Natural killer cell (primary cell): ENCODE measurements at regions of chr6 and their contacts with region 1.

Region 1: DNA sequence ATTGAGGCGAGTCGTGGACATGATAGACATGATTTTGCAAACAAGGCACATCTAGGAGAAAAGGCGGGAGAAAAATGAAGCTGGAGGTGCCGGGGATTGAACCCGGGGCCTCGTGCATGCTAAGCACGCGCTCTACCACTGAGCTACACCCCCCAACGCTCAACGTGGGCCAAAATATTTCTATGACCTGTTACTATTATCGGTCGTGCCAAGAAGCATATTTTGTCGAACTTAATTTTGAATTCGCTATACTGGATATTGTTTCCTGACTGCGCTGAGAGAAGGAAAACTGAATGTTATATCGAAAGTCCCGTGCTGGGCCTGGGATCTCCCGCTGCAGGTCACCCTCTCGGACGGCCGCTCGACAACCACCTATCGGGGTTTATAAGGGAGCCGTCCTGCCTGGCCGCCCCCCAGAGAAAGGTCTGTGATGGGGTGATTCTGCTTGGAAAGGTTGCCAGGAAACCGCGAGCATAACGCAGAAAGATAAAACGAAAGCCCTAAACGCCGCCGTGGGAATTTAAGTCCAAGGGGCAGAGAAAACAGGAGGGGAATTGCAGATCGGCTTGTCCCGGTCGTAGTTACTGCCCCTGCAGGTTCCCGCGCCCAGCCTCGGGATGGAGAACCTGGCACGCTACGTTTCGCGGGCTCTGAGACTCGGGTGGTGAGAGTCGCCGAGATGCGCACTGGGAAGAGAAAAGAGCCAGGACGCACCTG is 60.0 kb downstream of the TRIM27 start:
- DNase-seq: peak; percentile 74 to 93
- ATAC-seq: peak; percentile 41 to 47 (median 45)
- H3K4me3 ChIP-seq: peak overlapping the region; percentile 81
- H3K4me3 Mint-ChIP-seq: peak overlapping the region; percentile 99
- H3K27ac ChIP-seq: peak overlapping the region; percentile 39
- H3K27ac Mint-ChIP-seq: peak overlapping the region; percentile 93 to 99
- H3K4me1 ChIP-seq: peaks cover 32% of the 10 kb centered on the region
- H3K4me1 Mint-ChIP-seq: peaks cover 50 to 55% of the 10 kb centered on the region in 2 donors
- H3K27me3 ChIP-seq: no peaks in the 10 kb centered on the region
- H3K27me3 Mint-ChIP-seq: peaks cover 11 to 19% of the 10 kb centered on the region in 2 donors
- CTCF ChIP-seq: no peak

Region 2: DNA sequence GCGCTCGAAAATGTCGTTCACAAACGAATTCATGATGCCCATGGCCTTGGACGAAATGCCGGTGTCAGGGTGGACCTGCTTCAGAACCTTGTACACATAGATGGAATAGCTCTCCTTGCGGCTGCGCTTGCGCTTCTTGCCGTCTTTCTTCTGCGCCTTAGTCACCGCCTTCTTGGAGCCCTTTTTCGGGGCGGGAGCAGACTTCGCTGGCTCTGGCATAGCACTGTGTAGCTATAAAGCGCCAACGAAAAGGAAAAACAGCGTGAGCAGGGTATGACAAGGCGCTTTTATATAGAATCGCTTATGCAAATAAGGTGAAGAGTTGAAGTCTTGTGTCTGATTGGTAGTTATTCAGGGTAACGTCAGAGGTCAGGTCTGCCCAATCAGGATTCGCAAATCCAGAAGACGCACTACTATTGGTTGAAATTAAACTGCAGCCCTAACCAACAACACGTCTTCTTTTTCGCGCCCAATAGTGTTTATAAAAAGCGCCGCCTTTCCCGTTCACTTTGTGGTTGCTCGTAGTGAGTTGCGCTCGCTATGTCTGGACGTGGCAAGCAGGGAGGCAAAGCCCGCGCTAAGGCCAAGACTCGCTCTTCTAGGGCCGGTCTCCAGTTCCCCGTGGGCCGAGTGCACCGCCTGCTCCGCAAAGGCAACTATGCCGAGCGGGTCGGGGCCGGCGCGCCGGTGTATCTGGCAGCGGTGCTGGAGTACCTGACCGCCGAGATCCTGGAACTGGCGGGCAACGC is 1731.1 kb before region 1 on chr6:
- intact Hi-C with region 1: loop called (anchors 2 kb)
- DNase-seq: peak; percentile 87 to 98
- ATAC-seq: peak; percentile 82 to 95 (median 87)
- H3K4me3 ChIP-seq: peak overlapping the region; percentile 65
- H3K4me3 Mint-ChIP-seq: no peak overlapping the region
- H3K27ac ChIP-seq: peak overlapping the region; percentile 85
- H3K27ac Mint-ChIP-seq: no peak overlapping the region
- H3K4me1 ChIP-seq: peaks cover 29% of the 10 kb centered on the region
- H3K4me1 Mint-ChIP-seq: peaks cover 5 to 6% of the 10 kb centered on the region in 2 donors
- H3K27me3 ChIP-seq: no peaks in the 10 kb centered on the region
- H3K27me3 Mint-ChIP-seq: no peaks in the 10 kb centered on the region
- CTCF ChIP-seq: no peak

Region 3: DNA sequence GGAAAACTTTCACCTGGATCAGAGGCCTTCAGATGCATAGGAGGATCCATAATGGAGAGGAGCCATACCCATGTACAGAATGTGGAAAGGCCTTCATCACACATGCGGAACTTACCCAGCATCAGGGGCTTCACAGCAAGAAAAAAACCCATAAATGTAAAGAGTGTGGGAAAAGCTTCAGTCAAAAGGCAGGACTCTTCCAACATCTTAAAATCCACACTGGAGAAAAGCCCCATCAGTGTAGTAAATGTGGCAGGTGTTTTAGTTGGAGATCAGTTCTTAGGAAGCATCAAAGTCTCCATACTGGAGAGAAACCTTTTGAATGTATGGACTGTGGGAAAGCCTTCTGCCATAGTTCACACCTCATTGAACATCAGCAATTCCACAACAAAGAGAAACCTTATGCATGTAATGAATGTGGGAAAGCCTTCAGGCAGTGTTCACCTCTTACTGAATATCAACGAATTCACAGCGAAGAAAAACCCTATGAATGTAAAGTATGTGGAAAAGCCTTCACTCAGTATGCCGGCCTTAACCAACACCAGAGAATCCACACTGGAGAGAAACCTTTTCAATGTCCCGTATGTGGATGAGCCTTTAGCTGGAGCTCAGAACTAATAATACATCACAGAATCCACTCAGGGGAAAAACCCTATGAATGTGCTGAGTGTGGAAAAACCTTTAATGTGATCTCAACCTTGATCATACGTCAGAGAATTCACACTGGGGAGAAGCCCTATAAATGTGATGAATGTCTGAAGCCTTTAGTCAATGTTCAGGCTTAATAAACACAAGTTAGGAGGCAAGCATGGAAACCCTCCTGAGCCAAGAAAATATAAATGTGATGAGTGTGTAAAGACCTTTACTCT is 675.4 kb before region 1 on chr6:
- intact Hi-C with region 1: no loop called
- DNase-seq: no peak
- ATAC-seq: no peak
- H3K4me3 ChIP-seq: no peak overlapping the region
- H3K4me3 Mint-ChIP-seq: no peak overlapping the region
- H3K27ac ChIP-seq: no peak overlapping the region
- H3K27ac Mint-ChIP-seq: no peak overlapping the region
- H3K4me1 ChIP-seq: no peaks in the 10 kb centered on the region
- H3K4me1 Mint-ChIP-seq: no peaks in the 10 kb centered on the region
- H3K27me3 ChIP-seq: peaks cover 2% of the 10 kb centered on the region
- H3K27me3 Mint-ChIP-seq: peaks cover 8 to 39% of the 10 kb centered on the region in 2 donors
- CTCF ChIP-seq: no peak

Region 4: GRCh38 chr6:28880894-28881780 is 17.4 kb after region 1 on chr6:
- intact Hi-C with region 1: loop called (anchors 1 kb)
- DNase-seq: peak; percentile 60 to 74
- ATAC-seq: no peak
- H3K4me3 ChIP-seq: peak overlapping the region; percentile 32
- H3K4me3 Mint-ChIP-seq: peak overlapping the region; percentile 93
- H3K27ac ChIP-seq: no peak overlapping the region
- H3K27ac Mint-ChIP-seq: peak overlapping the region; percentile 84 to 96
- H3K4me1 ChIP-seq: peaks cover 31% of the 10 kb centered on the region
- H3K4me1 Mint-ChIP-seq: peaks cover 32 to 33% of the 10 kb centered on the region in 2 donors
- H3K27me3 ChIP-seq: peaks cover 6% of the 10 kb centered on the region
- H3K27me3 Mint-ChIP-seq: peaks cover 15 to 20% of the 10 kb centered on the region in 2 donors
- CTCF ChIP-seq: no peak

Region 5: DNA sequence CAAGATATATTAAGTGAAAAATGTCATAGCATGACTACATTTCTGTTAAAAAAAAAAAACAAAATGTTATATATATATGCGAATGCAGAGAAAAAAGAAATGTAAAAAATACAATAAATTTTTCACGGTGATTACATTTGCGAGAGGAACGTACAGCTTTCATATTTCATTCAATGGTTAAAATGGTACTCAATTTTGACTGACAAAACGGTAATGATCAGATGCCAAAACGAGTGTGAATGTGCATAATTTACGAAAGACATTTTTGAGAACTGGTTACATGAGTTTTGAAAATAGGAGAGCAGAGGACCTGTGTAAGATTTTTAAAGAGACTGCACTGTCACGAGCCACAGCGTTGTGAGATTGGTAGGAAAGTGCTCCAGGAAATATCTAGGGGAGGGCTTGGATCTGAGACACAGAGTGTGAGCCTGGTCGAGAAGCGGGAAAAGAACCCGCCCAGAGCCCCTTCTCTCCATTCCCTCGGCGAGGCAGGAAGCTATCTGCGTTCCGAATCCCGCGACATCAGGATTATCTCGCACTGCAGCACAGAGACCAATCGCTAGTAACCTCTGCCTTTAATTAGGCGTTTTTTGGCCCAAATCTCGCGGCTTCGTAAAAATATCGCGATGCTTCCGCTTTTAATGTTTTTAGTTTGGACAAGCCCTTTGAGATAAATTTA is 31.5 kb after region 1 on chr6:
- intact Hi-C with region 1: loop called (anchors 1 kb)
- DNase-seq: peak; percentile 84 to 96
- ATAC-seq: peak; percentile 66 to 84 (median 74)
- H3K4me3 ChIP-seq: peak overlapping the region; percentile 72
- H3K4me3 Mint-ChIP-seq: peak overlapping the region; percentile 97
- H3K27ac ChIP-seq: peak overlapping the region; percentile 96
- H3K27ac Mint-ChIP-seq: peak overlapping the region; percentile 99
- H3K4me1 ChIP-seq: peaks cover 13% of the 10 kb centered on the region
- H3K4me1 Mint-ChIP-seq: peaks cover 24 to 25% of the 10 kb centered on the region in 2 donors
- H3K27me3 ChIP-seq: no peaks in the 10 kb centered on the region
- H3K27me3 Mint-ChIP-seq: no peaks in the 10 kb centered on the region
- CTCF ChIP-seq: no peak

Region 6: GRCh38 chr6:28981833-28982475 is 118.2 kb after region 1 on chr6:
- intact Hi-C with region 1: loop called (anchors 5 kb)
- DNase-seq: peak; percentile 68 to 89
- ATAC-seq: peak; percentile 72 to 86 (median 73)
- H3K4me3 ChIP-seq: peak overlapping the region; percentile 86
- H3K4me3 Mint-ChIP-seq: peak overlapping the region; percentile 97
- H3K27ac ChIP-seq: peak overlapping the region; percentile 28
- H3K27ac Mint-ChIP-seq: peak overlapping the region; percentile 95 to 99
- H3K4me1 ChIP-seq: peaks cover 19% of the 10 kb centered on the region
- H3K4me1 Mint-ChIP-seq: peaks cover 66 to 67% of the 10 kb centered on the region in 2 donors
- H3K27me3 ChIP-seq: peaks cover 24% of the 10 kb centered on the region
- H3K27me3 Mint-ChIP-seq: peaks cover 41 to 68% of the 10 kb centered on the region in 2 donors
- CTCF ChIP-seq: no peak

Region 7: GRCh38 chr6:29153083-29153482 is 289.3 kb after region 1 on chr6:
- intact Hi-C with region 1: no loop called
- DNase-seq: no peak
- ATAC-seq: no peak
- H3K4me3 ChIP-seq: no peak overlapping the region
- H3K4me3 Mint-ChIP-seq: no peak overlapping the region
- H3K27ac ChIP-seq: no peak overlapping the region
- H3K27ac Mint-ChIP-seq: no peak overlapping the region
- H3K4me1 ChIP-seq: no peaks in the 10 kb centered on the region
- H3K4me1 Mint-ChIP-seq: no peaks in the 10 kb centered on the region
- H3K27me3 ChIP-seq: peaks cover 3% of the 10 kb centered on the region
- H3K27me3 Mint-ChIP-seq: peaks cover 3 to 15% of the 10 kb centered on the region in 2 donors
- CTCF ChIP-seq: no peak